ENCODE measurements at regions of chrX and their contacts with region 1.

Region 1: GRCh38 chrX:30889147-30890140 is at the start of gene TAB3:
- DNase-seq: peak; percentile 84 to 96
- ATAC-seq: peak; percentile 88 to 95 (median 90)
- H3K4me3 ChIP-seq: peak within 1 kb of the TSS; percentile 73
- H3K4me3 Mint-ChIP-seq: peak within 1 kb of the TSS; percentile 81
- H3K27ac ChIP-seq: peak within 1 kb of the TSS; percentile 91
- H3K27ac Mint-ChIP-seq: peak within 1 kb of the TSS; percentile 72 to 94
- H3K4me1 ChIP-seq: peaks cover 6% of the 10 kb centered on the region
- H3K4me1 Mint-ChIP-seq: peaks cover 14 to 36% of the 10 kb centered on the region in 2 donors
- H3K27me3 ChIP-seq: no peaks in the 10 kb centered on the region
- H3K27me3 Mint-ChIP-seq: no peaks in the 10 kb centered on the region
- CTCF ChIP-seq: no peak
- total RNA-seq, gene TAB3: 20.4 to 26.1 (median 21.3) TPM

Region 2: GRCh38 chrX:30570505-30570904 is 318.9 kb before region 1 on chrX:
- intact Hi-C with region 1: loop called (anchors 10 kb)
- DNase-seq: peak in 1 of 2 donors; percentile 67
- ATAC-seq: peak in 1 of 3 donors; percentile 59
- H3K4me3 ChIP-seq: no peak overlapping the region
- H3K4me3 Mint-ChIP-seq: no peak overlapping the region
- H3K27ac ChIP-seq: no peak overlapping the region
- H3K27ac Mint-ChIP-seq: no peak overlapping the region
- H3K4me1 ChIP-seq: peaks cover 5% of the 10 kb centered on the region
- H3K4me1 Mint-ChIP-seq: peaks cover 0 to 29% of the 10 kb centered on the region in 2 donors
- H3K27me3 ChIP-seq: no peaks in the 10 kb centered on the region
- H3K27me3 Mint-ChIP-seq: no peaks in the 10 kb centered on the region
- CTCF ChIP-seq: peak; percentile 55

Region 3: GRCh38 chrX:30652527-30653414 is 236.7 kb before region 1 on chrX:
- intact Hi-C with region 1: loop called (anchors 5 kb)
- DNase-seq: peak; percentile 91 to 92
- ATAC-seq: peak; percentile 88 to 97 (median 89)
- H3K4me3 ChIP-seq: peak overlapping the region; percentile 93
- H3K4me3 Mint-ChIP-seq: peak overlapping the region; percentile 89
- H3K27ac ChIP-seq: peak overlapping the region; percentile 90
- H3K27ac Mint-ChIP-seq: peak overlapping the region; percentile 79 to 89
- H3K4me1 ChIP-seq: peaks cover 8% of the 10 kb centered on the region
- H3K4me1 Mint-ChIP-seq: peaks cover 5 to 15% of the 10 kb centered on the region in 2 donors
- H3K27me3 ChIP-seq: no peaks in the 10 kb centered on the region
- H3K27me3 Mint-ChIP-seq: no peaks in the 10 kb centered on the region
- CTCF ChIP-seq: no peak